Activated CD4-positive, alpha-beta T cell treated with anti-CD3 and anti-CD28 coated beads for 36 hours (primary cell): ENCODE measurements at regions of chr1 and their contacts with region 1.

Region 1: DNA sequence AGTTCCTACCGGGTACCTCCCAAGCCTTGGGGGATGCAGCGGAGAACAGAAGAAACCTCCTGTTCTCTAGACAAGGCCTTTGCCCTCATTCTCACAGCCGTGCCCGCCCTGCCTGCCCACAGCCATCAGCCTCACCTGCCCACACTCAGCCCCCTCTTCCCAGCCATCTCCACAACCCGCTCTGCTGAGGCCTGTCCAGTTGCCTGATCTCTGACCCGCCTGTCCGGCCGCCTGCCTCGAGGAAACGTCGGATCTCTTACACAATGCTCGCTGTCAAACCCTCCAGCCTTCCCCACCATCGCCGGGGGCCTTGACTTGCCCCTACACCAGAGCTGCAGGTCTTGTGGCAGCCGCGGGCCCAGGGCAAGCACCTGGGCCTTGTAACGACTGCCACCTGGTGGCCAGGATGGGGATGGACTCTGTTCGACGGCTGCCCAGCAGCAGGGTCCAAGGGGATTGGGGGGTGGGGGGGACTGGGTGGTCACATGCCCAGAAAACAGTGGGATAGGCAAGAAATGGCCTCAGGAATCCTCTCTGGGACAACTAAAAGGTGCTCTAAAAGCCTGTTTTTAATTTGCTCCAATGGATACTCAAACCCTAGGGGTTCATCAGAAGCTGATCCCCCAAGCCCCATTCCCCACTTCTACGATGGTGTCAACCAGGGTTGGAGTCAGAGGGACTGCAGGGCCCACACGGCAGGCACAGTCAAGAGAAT is 31.0 kb downstream of the SLC45A1 start:
- DNase-seq: peak; percentile 83
- ATAC-seq: peak; percentile 83
- H3K4me3 Mint-ChIP-seq: no peak overlapping the region
- H3K27ac Mint-ChIP-seq: no peak overlapping the region
- H3K4me1 Mint-ChIP-seq: peaks cover 3% of the 10 kb centered on the region
- H3K27me3 Mint-ChIP-seq: peaks cover 2% of the 10 kb centered on the region

Region 2: DNA sequence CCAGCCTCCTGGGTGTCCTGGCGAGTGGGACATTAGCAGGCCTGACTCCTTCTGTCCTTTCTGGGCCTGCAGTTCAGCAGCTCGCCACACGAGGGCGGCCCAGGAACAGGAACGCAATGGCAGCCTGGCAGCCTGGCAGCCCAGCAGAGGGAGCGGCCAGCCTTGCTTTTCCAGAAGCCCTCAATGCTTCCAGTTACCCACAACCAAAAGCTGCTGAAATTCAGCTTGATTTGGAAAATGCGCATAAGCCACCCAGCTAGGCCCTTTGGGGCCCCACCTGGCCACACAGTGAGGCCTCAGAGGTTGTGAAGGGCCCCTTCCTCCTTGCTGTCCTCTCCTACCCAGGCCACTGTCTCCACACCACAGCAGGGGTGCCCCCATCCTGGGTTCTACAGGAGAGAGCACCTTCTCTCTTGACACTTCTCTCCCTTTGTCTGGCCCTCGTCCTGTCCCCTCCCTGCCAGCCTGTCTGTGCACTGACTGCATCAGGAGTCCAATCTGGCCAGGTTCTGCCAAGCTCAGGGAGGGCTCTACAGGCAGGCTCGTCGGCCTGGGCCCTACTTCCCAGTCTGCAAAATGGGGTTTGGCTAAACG is 681.2 kb before region 1 on chr1:
- CTCF ChIA-PET with region 1: no interaction called
- POLR2A ChIA-PET with region 1: no interaction called
- intact Hi-C with region 1: loop called in 1 of 2 experiments (anchors 1 kb)
- DNase-seq: peak; percentile 90
- ATAC-seq: peak; percentile 83
- H3K4me3 Mint-ChIP-seq: no peak overlapping the region
- H3K27ac Mint-ChIP-seq: no peak overlapping the region
- H3K4me1 Mint-ChIP-seq: no peaks in the 10 kb centered on the region
- H3K27me3 Mint-ChIP-seq: peaks cover 3% of the 10 kb centered on the region

Region 3: DNA sequence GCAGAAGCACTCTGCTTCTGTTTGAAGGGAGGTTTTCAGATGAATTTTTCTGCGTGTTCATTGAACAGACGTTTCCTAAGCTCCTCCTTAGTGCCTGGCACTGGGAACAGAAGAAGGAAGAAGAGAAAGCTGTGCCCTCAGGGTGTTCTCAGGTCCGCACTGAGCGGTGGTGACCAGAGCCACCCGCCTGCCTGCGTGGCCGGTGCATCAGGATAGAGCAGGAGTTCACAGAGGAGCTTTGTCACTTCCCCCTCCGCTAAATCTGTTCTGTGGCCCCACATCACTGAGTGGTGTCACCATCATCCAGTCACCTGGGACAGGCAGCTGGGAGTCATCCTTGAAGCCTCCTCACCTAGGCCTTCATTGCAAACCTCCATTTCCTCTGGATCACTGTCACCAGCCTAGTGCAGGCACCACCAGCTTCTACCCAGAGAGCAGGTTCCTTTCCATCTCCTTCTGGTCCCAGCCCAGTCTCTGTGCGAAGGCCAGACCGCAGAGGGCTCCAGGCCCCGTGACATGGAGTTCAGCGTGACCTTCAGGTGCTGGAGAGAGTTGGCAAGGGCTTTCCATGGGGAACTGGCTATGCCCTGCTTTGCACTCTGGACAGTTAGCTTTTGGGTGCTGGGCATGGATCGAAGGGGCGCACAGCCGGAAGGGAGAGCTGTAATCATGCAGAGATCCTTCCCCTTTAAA is 365.7 kb before region 1 on chr1:
- CTCF ChIA-PET with region 1: interaction called, 3 read pairs
- POLR2A ChIA-PET with region 1: no interaction called
- intact Hi-C with region 1: loop called (anchors 1 kb)
- DNase-seq: no peak
- ATAC-seq: no peak
- H3K4me3 Mint-ChIP-seq: no peak overlapping the region
- H3K27ac Mint-ChIP-seq: no peak overlapping the region
- H3K4me1 Mint-ChIP-seq: peaks cover 5% of the 10 kb centered on the region
- H3K27me3 Mint-ChIP-seq: no peaks in the 10 kb centered on the region

Region 4: GRCh38 chr1:8026153-8026975 is 322.6 kb before region 1 on chr1 and contains the start of gene ERRFI1:
- CTCF ChIA-PET with region 1: interaction called, 8 read pairs
- POLR2A ChIA-PET with region 1: no interaction called
- intact Hi-C with region 1: loop called in 1 of 2 experiments (anchors 1 kb)
- DNase-seq: peak; percentile 92
- ATAC-seq: peak; percentile 98
- H3K4me3 Mint-ChIP-seq: peak within 1 kb of the TSS; percentile 78
- H3K27ac Mint-ChIP-seq: peak within 1 kb of the TSS; percentile 67
- H3K4me1 Mint-ChIP-seq: peaks cover 13% of the 10 kb centered on the region
- H3K27me3 Mint-ChIP-seq: peaks cover 23% of the 10 kb centered on the region
- total RNA-seq, gene ERRFI1: 1.3 to 1.5 TPM

Region 5: DNA sequence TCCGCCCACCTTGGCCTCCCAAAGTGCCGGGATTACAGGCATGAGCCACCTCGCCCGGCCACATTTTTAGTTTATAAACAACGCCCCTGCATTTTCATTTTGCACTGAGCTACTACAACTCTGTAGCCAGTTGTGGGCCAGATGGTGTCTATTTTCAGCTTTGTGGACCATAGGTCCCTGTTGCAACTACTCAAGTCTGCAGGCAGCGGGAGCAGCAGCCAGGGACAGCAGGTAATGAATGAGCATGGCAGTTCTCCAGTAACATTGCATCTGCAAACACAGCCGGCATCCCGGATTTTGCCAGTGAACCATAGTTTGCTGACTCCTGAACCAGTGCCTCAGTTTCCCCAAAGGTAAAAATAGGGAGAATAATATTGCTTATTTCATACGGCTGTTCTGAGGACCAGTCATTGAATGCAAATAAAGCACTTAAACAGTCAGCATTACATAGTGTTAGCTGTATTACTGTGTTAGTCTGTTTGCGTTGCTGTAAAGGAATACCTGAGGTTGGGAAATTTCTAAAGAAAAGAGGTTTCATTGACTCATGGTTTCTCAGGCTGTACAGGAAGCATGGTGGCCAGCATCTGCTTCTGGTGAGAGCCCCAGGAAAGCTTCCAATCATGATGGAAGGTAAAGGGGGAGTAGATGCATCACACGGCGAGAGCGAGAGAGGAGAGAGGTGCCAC is 96.5 kb before region 1 on chr1:
- CTCF ChIA-PET with region 1: no interaction called
- POLR2A ChIA-PET with region 1: no interaction called
- intact Hi-C with region 1: no loop called
- DNase-seq: no peak
- ATAC-seq: no peak
- H3K4me3 Mint-ChIP-seq: no peak overlapping the region
- H3K27ac Mint-ChIP-seq: no peak overlapping the region
- H3K4me1 Mint-ChIP-seq: peaks cover 12% of the 10 kb centered on the region
- H3K27me3 Mint-ChIP-seq: peaks cover 6% of the 10 kb centered on the region

Region 6: DNA sequence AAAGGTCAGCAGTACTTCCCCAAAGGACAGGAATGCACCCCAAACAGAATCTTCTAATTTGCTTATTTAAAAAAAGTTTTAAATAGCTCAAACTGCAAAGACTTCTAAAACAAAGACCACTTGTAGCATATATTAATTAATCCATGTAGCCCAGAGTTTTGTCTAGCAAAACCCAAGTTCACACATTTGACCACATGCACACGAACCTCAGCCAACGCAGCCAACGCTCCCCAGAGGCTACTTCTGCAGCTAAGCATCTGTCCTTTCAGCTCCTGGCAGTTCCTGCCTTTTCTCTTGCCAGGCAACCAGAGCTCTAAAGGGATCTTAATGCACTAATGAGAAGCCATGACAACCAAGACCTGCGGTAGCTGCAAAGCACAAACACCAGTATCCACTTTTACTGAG is 378.9 kb after region 1 on chr1:
- CTCF ChIA-PET with region 1: interaction called, 12 read pairs
- POLR2A ChIA-PET with region 1: no interaction called
- intact Hi-C with region 1: no loop called
- DNase-seq: no peak
- ATAC-seq: no peak
- H3K4me3 Mint-ChIP-seq: no peak overlapping the region
- H3K27ac Mint-ChIP-seq: no peak overlapping the region
- H3K4me1 Mint-ChIP-seq: peaks cover 16% of the 10 kb centered on the region
- H3K27me3 Mint-ChIP-seq: no peaks in the 10 kb centered on the region